CD8-positive, alpha-beta T cell (primary cell): ENCODE measurements at regions of chr5 and their contacts with region 1.

Region 1: DNA sequence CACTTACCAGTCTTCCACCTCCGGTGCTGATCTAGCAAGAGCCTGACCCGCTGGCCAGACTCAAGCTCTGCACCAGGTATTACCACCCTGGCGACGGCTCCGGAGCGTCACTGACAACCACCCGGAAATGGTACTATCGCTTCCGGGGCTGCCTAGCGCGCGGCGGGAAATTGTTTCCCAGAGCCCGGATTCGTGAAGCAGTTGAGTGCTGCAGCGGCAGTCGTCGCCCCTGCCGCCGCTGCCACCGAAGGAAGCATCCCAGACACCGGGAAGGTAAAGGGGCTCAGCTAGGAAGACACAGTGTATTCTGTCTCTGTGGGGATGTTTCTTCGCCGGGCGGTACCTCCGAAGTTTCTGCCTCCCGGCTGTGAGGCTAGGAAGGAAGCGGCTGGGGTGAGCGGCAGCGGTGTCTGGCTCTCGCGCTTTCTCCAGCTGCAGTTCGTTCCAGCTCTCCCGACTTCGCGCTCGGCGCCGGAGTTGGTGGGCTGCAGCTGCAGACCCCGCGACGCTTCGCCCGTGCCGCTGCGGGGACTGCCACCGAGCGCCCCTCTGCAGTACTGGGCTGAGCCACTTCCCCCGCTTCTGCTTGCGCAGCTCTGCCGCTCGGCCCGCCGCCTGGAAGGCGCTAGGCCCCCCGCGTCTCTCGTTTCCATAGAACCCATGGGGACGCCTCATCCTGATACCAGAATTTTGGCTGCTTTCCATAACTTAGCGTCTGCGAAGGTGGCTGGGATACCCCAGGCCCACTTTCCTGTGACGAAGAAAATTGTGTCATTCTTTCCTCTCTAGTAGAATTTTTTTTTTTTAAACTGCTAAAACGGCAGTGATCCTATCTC is at the starts of genes KIAA0825 and SLF1:
- DNase-seq: peak; percentile 68 to 91 (median 86)
- ATAC-seq: peak; percentile 87
- H3K4me3 ChIP-seq: peak within 1 kb of the TSS; percentile 72 to 80
- H3K4me3 Mint-ChIP-seq: peak within 1 kb of the TSS; percentile 94
- H3K27ac ChIP-seq: peak within 1 kb of the TSS; percentile 59 to 74
- H3K27ac Mint-ChIP-seq: peak within 1 kb of the TSS; percentile 89
- H3K4me1 ChIP-seq: peaks cover 22% of the 10 kb centered on the region
- H3K4me1 Mint-ChIP-seq: peaks cover 53% of the 10 kb centered on the region
- H3K27me3 ChIP-seq: no peaks in the 10 kb centered on the region
- H3K27me3 Mint-ChIP-seq: no peaks in the 10 kb centered on the region
- CTCF ChIP-seq: no peak
- total RNA-seq, gene KIAA0825: 0.89 to 1.0 TPM
- total RNA-seq, gene SLF1: 10.0 to 11.1 TPM

Region 2: DNA sequence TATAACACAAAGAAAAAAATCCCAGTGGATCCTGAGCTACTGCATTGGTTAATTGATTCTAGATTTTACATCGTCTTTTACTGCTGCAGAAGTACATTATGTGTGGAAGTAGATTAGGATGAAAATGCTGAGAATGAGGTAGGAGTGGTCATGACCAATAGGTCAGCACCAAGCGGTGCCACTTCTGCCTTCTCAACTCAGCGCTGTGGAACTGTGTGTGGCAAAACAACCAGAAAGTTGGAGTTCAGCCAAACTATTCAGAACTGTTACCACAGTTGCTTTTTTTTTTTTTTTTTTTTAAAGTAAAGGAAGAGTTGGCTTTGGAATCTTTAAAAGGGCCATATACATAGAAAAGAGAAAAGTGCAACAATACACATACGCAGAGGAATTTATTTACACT is 901.5 kb before region 1 on chr5:
- CTCF ChIA-PET with region 1: no interaction called
- POLR2A ChIA-PET with region 1: no interaction called
- intact Hi-C with region 1: no loop called
- DNase-seq: no peak
- ATAC-seq: no peak
- H3K4me3 ChIP-seq: no peak overlapping the region
- H3K4me3 Mint-ChIP-seq: no peak overlapping the region
- H3K27ac ChIP-seq: no peak overlapping the region
- H3K27ac Mint-ChIP-seq: no peak overlapping the region
- H3K4me1 ChIP-seq: no peaks in the 10 kb centered on the region
- H3K4me1 Mint-ChIP-seq: peaks cover 18% of the 10 kb centered on the region
- H3K27me3 ChIP-seq: no peaks in the 10 kb centered on the region
- H3K27me3 Mint-ChIP-seq: no peaks in the 10 kb centered on the region
- CTCF ChIP-seq: no peak

Region 3: GRCh38 chr5:94111209-94112004 is 507.3 kb before region 1 on chr5:
- CTCF ChIA-PET with region 1: no interaction called
- POLR2A ChIA-PET with region 1: no interaction called
- intact Hi-C with region 1: loop called (anchors 1 to 2 kb)
- DNase-seq: peak; percentile 79 to 95 (median 93)
- ATAC-seq: peak; percentile 94
- H3K4me3 ChIP-seq: peak overlapping the region; percentile 73 to 90
- H3K4me3 Mint-ChIP-seq: peak overlapping the region; percentile 91
- H3K27ac ChIP-seq: peak overlapping the region; percentile 79 to 87
- H3K27ac Mint-ChIP-seq: peak overlapping the region; percentile 95
- H3K4me1 ChIP-seq: peaks cover 8% of the 10 kb centered on the region
- H3K4me1 Mint-ChIP-seq: peaks cover 44% of the 10 kb centered on the region
- H3K27me3 ChIP-seq: no peaks in the 10 kb centered on the region
- H3K27me3 Mint-ChIP-seq: peaks cover 3% of the 10 kb centered on the region
- CTCF ChIP-seq: no peak

Region 4: GRCh38 chr5:94577466-94578245 is 41.1 kb before region 1 on chr5:
- CTCF ChIA-PET with region 1: no interaction called
- POLR2A ChIA-PET with region 1: interaction called, 7 read pairs
- intact Hi-C with region 1: loop called in 1 of 2 experiments (anchors 2 kb)
- DNase-seq: peak in 2 of 9 experiments; percentile 51 to 67
- ATAC-seq: peak; percentile 48
- H3K4me3 ChIP-seq: no peak overlapping the region
- H3K4me3 Mint-ChIP-seq: no peak overlapping the region
- H3K27ac ChIP-seq: peak overlapping the region in 1 of 2 experiments; percentile 18
- H3K27ac Mint-ChIP-seq: no peak overlapping the region
- H3K4me1 ChIP-seq: peaks cover 19% of the 10 kb centered on the region
- H3K4me1 Mint-ChIP-seq: peaks cover 43% of the 10 kb centered on the region
- H3K27me3 ChIP-seq: no peaks in the 10 kb centered on the region
- H3K27me3 Mint-ChIP-seq: no peaks in the 10 kb centered on the region
- CTCF ChIP-seq: no peak

Region 5: DNA sequence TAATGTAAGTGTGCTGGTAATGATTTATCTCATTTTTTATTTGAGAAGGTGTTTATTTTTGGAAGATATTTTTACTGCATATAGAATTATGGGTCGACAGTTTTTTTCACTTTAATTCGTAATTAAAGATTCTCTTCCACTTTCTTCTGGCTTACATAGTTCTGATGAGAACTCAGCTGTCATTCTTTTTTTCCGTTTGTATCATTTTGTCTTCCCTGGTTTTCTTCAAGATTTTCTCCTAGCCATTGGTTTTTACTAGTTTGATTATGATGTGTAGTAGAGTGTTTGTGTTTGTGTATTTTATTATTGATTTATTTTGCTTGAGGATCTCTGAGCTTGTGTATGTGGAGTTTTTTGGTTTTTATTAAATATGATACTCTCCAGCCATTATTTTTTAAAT is 21.5 kb after region 1 on chr5:
- CTCF ChIA-PET with region 1: no interaction called
- POLR2A ChIA-PET with region 1: no interaction called
- intact Hi-C with region 1: no loop called
- DNase-seq: no peak
- ATAC-seq: no peak
- H3K4me3 ChIP-seq: no peak overlapping the region
- H3K4me3 Mint-ChIP-seq: no peak overlapping the region
- H3K27ac ChIP-seq: no peak overlapping the region
- H3K27ac Mint-ChIP-seq: no peak overlapping the region
- H3K4me1 ChIP-seq: no peaks in the 10 kb centered on the region
- H3K4me1 Mint-ChIP-seq: peaks cover 14% of the 10 kb centered on the region
- H3K27me3 ChIP-seq: no peaks in the 10 kb centered on the region
- H3K27me3 Mint-ChIP-seq: no peaks in the 10 kb centered on the region
- CTCF ChIP-seq: no peak

Region 6: DNA sequence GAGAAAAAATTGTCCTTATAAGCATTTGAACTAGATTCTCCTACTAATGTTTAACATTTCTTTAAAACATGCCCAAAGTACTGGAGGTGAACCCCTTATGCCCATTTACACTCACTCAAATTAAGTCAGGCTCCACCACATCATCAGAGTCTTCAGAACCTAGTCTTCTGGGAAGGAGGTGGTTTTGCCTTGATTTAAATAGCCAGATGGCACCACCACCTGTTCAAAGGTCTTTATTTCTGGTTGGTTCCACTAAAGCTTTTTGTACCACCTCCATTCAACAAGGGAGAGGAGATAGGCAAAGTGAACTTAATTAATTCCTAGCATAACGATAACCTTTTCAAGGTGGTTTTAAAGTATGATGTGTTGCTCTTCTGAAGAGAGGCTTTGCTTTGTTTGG is 189.3 kb after region 1 on chr5:
- CTCF ChIA-PET with region 1: no interaction called
- POLR2A ChIA-PET with region 1: no interaction called
- intact Hi-C with region 1: loop called in 1 of 2 experiments (anchors 5 kb)
- DNase-seq: no peak
- ATAC-seq: no peak
- H3K4me3 ChIP-seq: no peak overlapping the region
- H3K4me3 Mint-ChIP-seq: no peak overlapping the region
- H3K27ac ChIP-seq: no peak overlapping the region
- H3K27ac Mint-ChIP-seq: no peak overlapping the region
- H3K4me1 ChIP-seq: no peaks in the 10 kb centered on the region
- H3K4me1 Mint-ChIP-seq: no peaks in the 10 kb centered on the region
- H3K27me3 ChIP-seq: peaks cover 0 to 3% of the 10 kb centered on the region in 2 experiments
- H3K27me3 Mint-ChIP-seq: no peaks in the 10 kb centered on the region
- CTCF ChIP-seq: no peak